ENCODE measurements at regions of chr19 and their contacts with region 1.

Region 1: DNA sequence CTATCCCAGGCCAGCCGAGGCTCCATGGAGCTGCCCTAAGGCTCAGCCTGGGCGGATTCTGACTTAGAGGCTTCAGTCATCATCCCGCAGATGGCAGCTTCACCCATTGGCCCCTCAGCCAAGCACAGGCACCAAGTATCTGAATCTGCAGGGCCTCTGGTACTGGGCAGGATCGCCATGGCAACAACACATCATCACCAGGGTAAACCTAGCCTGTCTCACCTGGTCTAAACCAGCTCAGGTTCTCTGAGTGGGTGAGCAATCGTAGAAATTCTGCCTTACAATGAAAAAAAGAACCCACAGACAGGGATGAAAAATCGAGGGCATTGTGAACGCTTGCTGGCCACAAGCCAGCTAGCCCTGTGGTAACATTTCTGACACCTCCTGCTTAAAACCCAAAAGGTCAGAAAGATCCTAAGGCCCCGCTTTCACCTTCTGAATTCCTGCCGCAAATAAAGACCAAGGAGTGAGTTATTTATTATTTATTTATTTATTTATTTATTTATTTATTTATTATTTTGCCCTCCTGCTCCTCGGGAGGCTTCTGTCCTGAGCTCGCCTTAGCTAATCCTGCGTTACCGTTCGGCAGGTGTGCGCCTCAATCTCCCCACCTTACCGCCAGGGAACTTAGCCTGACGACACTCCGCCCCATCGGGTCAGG is 12.0 kb upstream of the CEACAM21 start:
- DNase-seq: peak in 4 of 5 donors; percentile 32 to 80 (median 64)
- H3K4me3 ChIP-seq: peak overlapping the region; percentile 52
- H3K4me3 Mint-ChIP-seq: peak overlapping the region in 6 of 7 donors; percentile 53 to 88 (median 64)
- H3K27ac ChIP-seq: no peak overlapping the region
- H3K27ac Mint-ChIP-seq: peak overlapping the region in 6 of 8 donors; percentile 68 to 93 (median 84)
- H3K4me1 ChIP-seq: peaks cover 62% of the 10 kb centered on the region
- H3K4me1 Mint-ChIP-seq: peaks cover 74 to 90% (median 88%) of the 10 kb centered on the region in 3 donors
- H3K27me3 ChIP-seq: no peaks in the 10 kb centered on the region
- H3K27me3 Mint-ChIP-seq: no peaks in the 10 kb centered on the region

Region 2: GRCh38 chr19:41531438-41532311 is 32.3 kb before region 1 on chr19:
- CTCF ChIA-PET with region 1: interaction called, 180 read pairs
- POLR2A ChIA-PET with region 1: no interaction called
- DNase-seq: peak; percentile 46 to 92 (median 77)
- H3K4me3 ChIP-seq: peak overlapping the region; percentile 52
- H3K4me3 Mint-ChIP-seq: peak overlapping the region; percentile 62 to 83 (median 73)
- H3K27ac ChIP-seq: no peak overlapping the region
- H3K27ac Mint-ChIP-seq: peak overlapping the region in 7 of 8 donors; percentile 64 to 94 (median 87)
- H3K4me1 ChIP-seq: peaks cover 51% of the 10 kb centered on the region
- H3K4me1 Mint-ChIP-seq: peaks cover 53 to 68% (median 61%) of the 10 kb centered on the region in 3 donors
- H3K27me3 ChIP-seq: no peaks in the 10 kb centered on the region
- H3K27me3 Mint-ChIP-seq: peaks cover 1 to 9% of the 10 kb centered on the region in 2 donors

Region 3: DNA sequence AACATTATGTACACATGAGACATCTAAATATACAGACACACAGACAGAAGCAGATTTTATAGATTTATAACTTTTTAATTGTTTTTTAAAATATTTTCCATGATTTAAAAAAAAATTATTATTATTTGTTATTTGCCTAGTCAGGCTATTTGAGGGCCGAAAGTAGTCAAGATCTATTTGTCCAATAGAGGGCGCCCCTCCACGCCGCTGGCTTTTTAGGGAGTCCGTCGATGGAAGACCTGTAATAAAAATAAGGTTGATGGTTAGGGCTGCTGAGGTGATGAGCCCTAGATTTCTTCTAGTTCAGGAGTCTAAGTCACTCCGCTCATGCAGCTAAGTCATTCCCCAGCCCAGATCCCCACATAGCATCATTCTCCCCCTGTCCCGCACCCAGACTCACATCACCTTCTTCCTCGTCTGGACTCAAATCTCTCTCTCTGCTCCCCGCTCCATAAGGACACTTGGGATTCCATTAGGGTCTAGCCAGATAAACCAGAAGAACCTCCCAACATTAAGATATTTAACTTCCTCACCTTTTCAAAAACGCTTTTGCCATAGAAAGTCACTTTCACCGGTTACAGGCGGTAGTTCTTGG is 21.9 kb before region 1 on chr19:
- CTCF ChIA-PET with region 1: interaction called, 180 read pairs
- POLR2A ChIA-PET with region 1: interaction called, 6 read pairs
- DNase-seq: peak; percentile 61 to 86 (median 69)
- H3K4me3 ChIP-seq: no peak overlapping the region
- H3K4me3 Mint-ChIP-seq: peak overlapping the region in 6 of 7 donors; percentile 15 to 57 (median 53)
- H3K27ac ChIP-seq: no peak overlapping the region
- H3K27ac Mint-ChIP-seq: peak overlapping the region; percentile 9 to 94 (median 37)
- H3K4me1 ChIP-seq: peaks cover 46% of the 10 kb centered on the region
- H3K4me1 Mint-ChIP-seq: peaks cover 42 to 51% (median 49%) of the 10 kb centered on the region in 3 donors
- H3K27me3 ChIP-seq: no peaks in the 10 kb centered on the region
- H3K27me3 Mint-ChIP-seq: no peaks in the 10 kb centered on the region

Region 4: GRCh38 chr19:41548954-41549688 is 14.9 kb before region 1 on chr19:
- CTCF ChIA-PET with region 1: interaction called, 180 read pairs
- POLR2A ChIA-PET with region 1: interaction called, 14 read pairs
- DNase-seq: peak; percentile 59 to 85 (median 69)
- H3K4me3 ChIP-seq: peak overlapping the region; percentile 88
- H3K4me3 Mint-ChIP-seq: peak overlapping the region; percentile 95 to 100 (median 98)
- H3K27ac ChIP-seq: peak overlapping the region; percentile 66
- H3K27ac Mint-ChIP-seq: peak overlapping the region; percentile 88 to 98 (median 95)
- H3K4me1 ChIP-seq: peaks cover 56% of the 10 kb centered on the region
- H3K4me1 Mint-ChIP-seq: peaks cover 61 to 73% (median 73%) of the 10 kb centered on the region in 3 donors
- H3K27me3 ChIP-seq: no peaks in the 10 kb centered on the region
- H3K27me3 Mint-ChIP-seq: peaks cover 0 to 3% of the 10 kb centered on the region in 2 donors

Region 5: DNA sequence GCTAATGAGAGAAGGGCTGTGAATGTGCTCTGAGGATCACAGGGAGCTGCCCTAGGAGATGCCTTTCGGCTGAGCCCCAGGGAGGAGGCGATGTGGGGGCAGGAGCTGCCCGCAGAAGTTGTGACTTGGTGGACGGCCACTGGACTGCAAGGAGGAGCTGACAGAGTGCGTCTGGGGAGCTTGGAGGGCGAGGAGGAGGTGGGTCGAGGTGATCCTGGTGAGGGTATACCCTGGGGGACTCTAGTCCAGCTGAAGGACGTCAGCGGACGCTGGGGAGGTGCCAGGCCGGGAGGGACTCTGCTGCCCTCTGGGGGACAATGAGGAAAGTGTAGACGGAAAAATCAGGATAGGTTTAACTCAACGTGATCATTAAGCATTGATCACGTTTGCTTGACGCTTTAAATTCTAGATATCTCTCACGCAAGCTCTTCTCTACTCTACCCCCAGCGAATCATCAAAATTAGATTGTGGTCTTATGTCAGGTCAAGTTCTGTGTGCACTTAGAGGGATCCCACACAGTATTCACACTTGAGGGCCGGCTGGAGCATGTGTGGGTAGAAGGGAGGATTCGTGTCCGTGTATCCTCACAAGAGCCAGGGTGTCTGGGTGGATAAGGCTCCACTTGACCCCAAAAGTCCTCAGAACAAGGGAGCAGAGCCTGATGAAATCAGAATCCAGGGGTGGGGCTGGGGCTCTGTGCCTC is 127.4 kb after region 1 on chr19:
- CTCF ChIA-PET with region 1: no interaction called
- POLR2A ChIA-PET with region 1: no interaction called
- DNase-seq: peak in 1 of 5 donors; percentile 19
- H3K4me3 ChIP-seq: no peak overlapping the region
- H3K4me3 Mint-ChIP-seq: no peak overlapping the region
- H3K27ac ChIP-seq: no peak overlapping the region
- H3K27ac Mint-ChIP-seq: no peak overlapping the region
- H3K4me1 ChIP-seq: no peaks in the 10 kb centered on the region
- H3K4me1 Mint-ChIP-seq: no peaks in the 10 kb centered on the region
- H3K27me3 ChIP-seq: no peaks in the 10 kb centered on the region
- H3K27me3 Mint-ChIP-seq: peaks cover 41 to 67% of the 10 kb centered on the region in 2 donors